SK-N-SH (cell line): ENCODE measurements at regions of chr17 and their contacts with region 1.

Region 1: DNA sequence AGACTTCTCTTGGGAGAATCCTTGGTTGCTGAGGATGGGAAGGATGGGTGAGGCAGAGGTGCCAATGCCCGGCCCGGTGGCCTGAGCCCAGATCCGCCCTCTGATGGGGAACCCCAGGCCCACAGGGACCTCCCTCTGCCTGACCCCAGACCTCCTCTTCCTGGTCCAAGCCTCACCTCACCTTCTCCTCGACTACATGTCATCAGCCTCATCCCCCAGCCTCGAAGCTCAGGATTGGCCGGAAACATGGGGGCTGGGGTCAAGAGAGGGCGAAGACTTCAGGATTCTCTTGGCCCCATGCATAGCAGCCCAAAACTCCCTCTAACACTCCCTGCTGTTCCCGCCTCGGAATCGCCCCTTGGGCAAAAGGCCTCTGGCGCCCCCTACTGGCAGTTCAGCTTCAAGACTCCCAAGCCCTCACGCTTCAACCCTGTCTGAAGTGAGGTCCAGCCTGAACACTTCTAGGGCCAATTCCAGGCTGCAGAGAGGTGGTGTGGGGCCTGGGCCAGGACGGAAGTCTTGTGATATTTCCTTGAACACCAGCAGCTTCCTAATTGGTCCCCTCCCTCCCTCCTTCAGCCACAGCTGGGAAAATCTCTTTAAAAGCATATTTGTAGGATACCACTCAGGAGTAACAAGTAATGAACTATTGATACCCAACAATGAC is 47.2 kb downstream of the ARHGAP27 start:
- DNase-seq: peak; percentile 87
- H3K4me3 ChIP-seq: peak overlapping the region in 1 of 2 experiments; percentile 21; a peak in 1 of 4 replicates
- H3K27ac ChIP-seq: no peak overlapping the region
- H3K4me1 ChIP-seq: peaks cover 0 to 6% of the 10 kb centered on the region in 2 experiments; a peak in 1 of 4 replicates
- H3K27me3 ChIP-seq: no peaks in the 10 kb centered on the region
- CTCF ChIP-seq: peak; percentile 97
- EP300 ChIP-seq: no peak
- RAD21 ChIP-seq: peak; percentile 97

Region 2: DNA sequence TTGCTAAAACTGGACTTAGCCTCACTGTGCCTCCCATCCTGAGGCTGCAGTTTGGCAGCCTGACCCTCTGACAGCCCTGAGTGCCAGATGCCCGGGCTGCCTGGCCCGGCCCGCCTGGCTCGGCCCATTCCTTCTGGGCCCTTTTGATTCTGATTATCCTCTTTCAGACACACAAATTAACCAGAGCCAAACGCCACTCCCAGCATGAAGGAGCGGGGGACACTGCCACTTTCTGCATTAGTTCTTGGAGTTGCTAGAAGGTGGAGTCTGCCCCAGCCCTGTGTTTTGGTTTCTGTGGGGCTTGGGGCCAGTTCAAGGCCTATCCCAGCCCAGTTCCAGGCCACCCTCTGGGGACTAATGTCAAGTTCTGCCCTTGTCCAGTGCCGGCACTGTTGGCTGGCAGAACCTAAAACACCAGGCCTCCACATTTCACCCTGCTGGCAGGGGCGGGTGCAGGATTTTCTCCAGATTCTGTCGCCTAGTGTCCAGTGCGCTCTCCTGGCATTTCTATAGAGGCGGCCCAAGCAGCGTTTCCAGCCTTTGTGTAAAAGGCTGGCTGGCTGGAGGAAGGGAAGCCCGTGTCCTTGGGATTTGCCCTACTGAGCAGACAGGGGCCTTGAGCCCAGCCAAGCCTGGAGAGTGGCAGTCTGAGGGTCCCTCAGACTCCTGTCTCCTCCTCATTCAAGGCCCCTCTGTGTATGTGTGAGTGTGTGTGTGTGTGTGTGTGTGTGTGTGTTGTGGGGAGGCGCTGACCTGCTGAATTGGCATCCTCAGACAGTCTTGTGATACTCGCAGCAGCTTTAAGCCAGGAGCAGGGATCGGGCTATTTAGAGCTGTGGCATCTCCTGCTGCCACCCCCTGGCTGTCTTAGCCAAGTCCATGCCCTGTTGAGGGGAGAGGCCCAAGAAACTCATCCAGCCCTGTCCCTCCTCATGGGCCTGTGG is 274.5 kb before region 1 on chr17:
- CTCF ChIA-PET with region 1: no interaction called
- POLR2A ChIA-PET with region 1: no interaction called
- DNase-seq: peak; percentile 36
- H3K4me3 ChIP-seq: no peak overlapping the region
- H3K27ac ChIP-seq: no peak overlapping the region
- H3K4me1 ChIP-seq: peaks cover 0 to 13% of the 10 kb centered on the region in 2 experiments; a peak in 1 of 4 replicates
- H3K27me3 ChIP-seq: no peaks in the 10 kb centered on the region
- CTCF ChIP-seq: no peak
- EP300 ChIP-seq: no peak
- RAD21 ChIP-seq: no peak

Region 3: GRCh38 chr17:45218895-45219661 is 166.4 kb before region 1 on chr17:
- CTCF ChIA-PET with region 1: interaction called, 260 read pairs
- POLR2A ChIA-PET with region 1: no interaction called
- DNase-seq: peak; percentile 86
- H3K4me3 ChIP-seq: peak overlapping the region in 1 of 2 experiments; percentile 28; a peak in 1 of 4 replicates
- H3K27ac ChIP-seq: no peak overlapping the region
- H3K4me1 ChIP-seq: peaks cover 0 to 24% of the 10 kb centered on the region in 2 experiments; a peak in 1 of 4 replicates
- H3K27me3 ChIP-seq: no peaks in the 10 kb centered on the region
- CTCF ChIP-seq: peak; percentile 93
- EP300 ChIP-seq: no peak; a peak in 1 of 4 replicates
- RAD21 ChIP-seq: peak; percentile 100

Region 4: DNA sequence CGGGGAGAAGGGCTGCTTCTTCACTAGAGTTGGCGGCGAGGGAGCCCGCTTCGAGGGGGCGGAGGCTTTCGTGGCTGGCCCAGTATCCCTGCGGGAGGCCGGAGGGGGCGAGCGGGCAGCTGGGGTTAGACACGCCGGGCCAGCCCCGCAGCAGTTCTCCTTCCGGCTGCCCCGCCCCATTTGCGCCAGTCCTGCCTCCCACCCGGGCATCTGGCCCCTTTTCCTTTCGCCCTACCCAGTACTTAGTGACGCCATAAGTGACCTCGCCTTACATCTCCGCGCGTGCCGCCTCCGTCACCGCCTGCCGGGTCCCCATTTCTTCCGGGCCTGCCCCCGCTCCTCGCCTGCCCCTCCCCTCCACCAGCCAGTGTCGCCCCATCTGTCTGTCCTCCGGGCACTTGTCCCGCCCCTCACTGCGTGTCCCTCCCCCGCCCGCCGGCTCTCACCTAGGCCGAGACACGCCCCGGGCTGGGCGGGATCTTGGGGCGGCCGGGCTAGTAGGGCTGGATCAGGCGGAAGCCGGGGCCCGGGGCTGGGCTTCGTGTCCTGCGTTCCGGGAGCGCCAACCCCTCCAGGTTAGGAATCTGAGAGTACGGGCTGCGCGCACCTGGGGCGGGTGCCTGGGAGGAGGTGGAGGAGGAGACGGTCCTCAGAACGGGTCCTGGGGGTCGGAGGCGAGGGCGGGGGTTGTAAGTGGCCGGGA is 137.9 kb before region 1 on chr17:
- CTCF ChIA-PET with region 1: interaction called, 47 read pairs
- POLR2A ChIA-PET with region 1: interaction called, 4 read pairs
- DNase-seq: peak; percentile 95
- H3K4me3 ChIP-seq: peak overlapping the region; percentile 65 to 80
- H3K27ac ChIP-seq: peak overlapping the region; percentile 44 to 86; a peak in 3 of 4 replicates
- H3K4me1 ChIP-seq: peaks cover 0 to 20% of the 10 kb centered on the region in 2 experiments; a peak in 1 of 4 replicates
- H3K27me3 ChIP-seq: no peaks in the 10 kb centered on the region
- CTCF ChIP-seq: no peak
- EP300 ChIP-seq: no peak
- RAD21 ChIP-seq: no peak

Region 5: GRCh38 chr17:45284176-45285140 is 101.0 kb before region 1 on chr17:
- CTCF ChIA-PET with region 1: interaction called, 17 read pairs
- POLR2A ChIA-PET with region 1: no interaction called
- DNase-seq: no peak
- H3K4me3 ChIP-seq: no peak overlapping the region
- H3K27ac ChIP-seq: no peak overlapping the region; a peak in 1 of 4 replicates
- H3K4me1 ChIP-seq: peaks cover 0 to 36% of the 10 kb centered on the region in 2 experiments; a peak in 2 of 4 replicates
- H3K27me3 ChIP-seq: no peaks in the 10 kb centered on the region
- CTCF ChIP-seq: peak; percentile 42
- EP300 ChIP-seq: no peak
- RAD21 ChIP-seq: peak; percentile 24; the same call in 1 of the 2 replicates

Region 6: GRCh38 chr17:45307290-45308015 is 78.0 kb before region 1 on chr17:
- CTCF ChIA-PET with region 1: interaction called, 29 read pairs
- POLR2A ChIA-PET with region 1: no interaction called
- DNase-seq: no peak
- H3K4me3 ChIP-seq: no peak overlapping the region
- H3K27ac ChIP-seq: peak overlapping the region; percentile 48 to 98; a peak in 3 of 4 replicates
- H3K4me1 ChIP-seq: peaks cover 27 to 48% of the 10 kb centered on the region in 2 experiments
- H3K27me3 ChIP-seq: no peaks in the 10 kb centered on the region
- CTCF ChIP-seq: no peak
- EP300 ChIP-seq: peak in 1 of 2 experiments; percentile 68; a peak in 2 of 4 replicates
- RAD21 ChIP-seq: no peak

Region 7: GRCh38 chr17:45364531-45365390 is 20.7 kb before region 1 on chr17:
- CTCF ChIA-PET with region 1: interaction called, 13 read pairs
- POLR2A ChIA-PET with region 1: no interaction called
- DNase-seq: peak; percentile 24
- H3K4me3 ChIP-seq: no peak overlapping the region
- H3K27ac ChIP-seq: no peak overlapping the region
- H3K4me1 ChIP-seq: peaks cover 0 to 8% of the 10 kb centered on the region in 2 experiments; a peak in 1 of 4 replicates
- H3K27me3 ChIP-seq: no peaks in the 10 kb centered on the region
- CTCF ChIP-seq: no peak
- EP300 ChIP-seq: no peak
- RAD21 ChIP-seq: no peak

Region 8: DNA sequence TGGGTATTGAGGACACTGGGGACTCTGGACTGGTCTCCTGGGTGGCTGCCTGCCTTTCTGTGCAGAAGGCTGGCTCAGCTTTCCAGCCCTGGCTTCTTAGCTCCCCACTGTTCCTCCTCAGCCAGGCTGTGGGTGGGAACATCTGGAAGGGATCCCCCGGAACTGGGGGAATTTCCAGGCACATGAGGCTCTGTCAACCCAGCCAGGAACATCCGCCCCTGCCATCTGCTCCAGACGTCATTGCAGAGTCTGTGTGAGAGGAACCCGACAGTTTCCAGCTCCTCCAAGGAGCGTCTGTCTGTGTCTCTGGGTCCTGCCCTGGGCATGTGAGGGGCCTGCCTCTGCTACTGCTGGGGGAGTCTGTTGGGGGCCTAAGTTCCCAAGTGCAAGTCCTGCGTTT is 362.4 kb after region 1 on chr17:
- CTCF ChIA-PET with region 1: no interaction called
- POLR2A ChIA-PET with region 1: no interaction called
- DNase-seq: no peak
- H3K4me3 ChIP-seq: no peak overlapping the region
- H3K27ac ChIP-seq: no peak overlapping the region
- H3K4me1 ChIP-seq: no peaks in the 10 kb centered on the region; a peak in 1 of 4 replicates
- H3K27me3 ChIP-seq: peaks cover 31% of the 10 kb centered on the region; the same call in 1 of the 2 replicates
- CTCF ChIP-seq: no peak
- EP300 ChIP-seq: no peak
- RAD21 ChIP-seq: no peak